ENCODE measurements at regions of chr14 and their contacts with region 1.

Region 1: GRCh38 chr14:55051426-55052268 is at the start of gene MAPK1IP1L:
- DNase-seq: peak; percentile 95

Region 2: DNA sequence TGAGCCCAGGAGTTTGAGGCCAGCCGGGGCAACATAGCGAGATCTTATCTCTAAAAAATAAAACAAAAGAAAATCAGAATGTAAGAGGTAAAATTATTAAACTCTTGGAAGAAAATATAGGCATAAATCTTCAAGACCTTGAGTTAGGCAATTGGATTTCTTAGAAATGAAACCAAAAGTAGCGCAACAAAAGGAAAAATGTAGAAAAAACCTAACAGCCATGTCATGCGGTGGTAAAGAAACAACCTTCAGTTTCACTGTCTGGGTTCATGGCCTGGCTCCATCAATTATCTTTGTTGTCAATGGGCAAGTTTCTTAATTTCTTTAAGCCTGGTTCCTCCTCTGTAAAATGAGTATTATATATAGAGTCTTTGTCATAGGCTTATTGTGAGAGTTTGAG is 143.5 kb before region 1 on chr14:
- CTCF ChIA-PET with region 1: no interaction called
- POLR2A ChIA-PET with region 1: no interaction called
- DNase-seq: no peak

Region 3: GRCh38 chr14:55026793-55027561 is 24.7 kb before region 1 on chr14 and contains the starts of genes SOCS4 and WDHD1:
- CTCF ChIA-PET with region 1: interaction called, 9 read pairs
- POLR2A ChIA-PET with region 1: interaction called, 52 read pairs
- DNase-seq: peak; percentile 95

Region 4: DNA sequence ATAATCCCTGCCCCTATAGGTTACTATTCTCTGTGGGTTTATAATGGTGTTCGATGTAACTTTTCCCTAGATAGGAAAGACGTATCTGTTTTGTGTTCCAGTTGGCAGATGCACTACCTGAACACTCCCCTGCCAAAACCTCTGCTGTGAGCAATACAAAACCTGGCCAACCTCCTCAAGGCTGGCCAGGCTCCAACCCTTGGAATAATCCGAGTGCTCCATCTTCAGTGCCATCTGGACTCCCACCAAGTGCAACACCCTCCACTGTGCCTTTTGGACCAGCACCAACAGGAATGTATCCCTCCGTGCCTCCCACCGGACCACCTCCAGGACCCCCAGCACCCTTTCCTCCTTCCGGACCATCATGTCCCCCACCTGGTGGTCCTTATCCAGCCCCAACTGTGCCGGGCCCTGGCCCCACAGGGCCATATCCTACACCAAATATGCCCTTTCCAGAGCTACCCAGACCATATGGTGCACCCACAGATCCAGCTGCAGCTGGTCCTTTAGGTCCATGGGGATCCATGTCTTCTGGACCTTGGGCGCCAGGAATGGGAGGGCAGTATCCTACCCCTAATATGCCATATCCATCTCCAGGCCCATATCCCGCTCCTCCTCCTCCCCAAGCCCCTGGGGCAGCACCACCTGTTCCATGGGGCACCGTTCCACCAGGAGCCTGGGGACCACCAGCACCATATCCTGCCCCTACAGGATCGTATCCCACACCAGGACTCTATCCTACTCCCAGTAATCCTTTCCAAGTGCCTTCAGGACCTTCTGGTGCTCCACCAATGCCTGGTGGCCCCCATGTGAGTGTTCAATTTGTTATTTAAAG is 11.1 kb after region 1 on chr14:
- CTCF ChIA-PET with region 1: interaction called, 4 read pairs
- POLR2A ChIA-PET with region 1: interaction called, 13 read pairs
- DNase-seq: no peak

Region 5: DNA sequence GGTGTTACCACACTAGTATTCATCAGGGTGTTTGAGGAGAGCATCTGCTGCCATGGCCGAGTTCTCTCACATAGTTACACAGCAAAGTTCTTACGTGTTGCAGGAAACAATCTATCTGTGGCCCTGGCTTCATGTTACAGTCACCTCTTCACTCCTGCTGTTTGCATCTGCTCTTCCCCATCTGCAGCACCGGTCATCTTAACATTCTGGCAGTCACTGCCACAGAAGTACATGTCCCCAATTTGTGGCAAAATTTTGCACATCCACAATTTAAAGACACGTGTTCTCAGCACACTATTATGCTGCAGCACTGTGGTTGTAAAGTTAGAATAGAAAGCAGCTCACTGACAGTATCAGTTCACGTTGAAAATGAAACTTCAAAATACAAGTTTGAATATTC is 23.0 kb after region 1 on chr14:
- CTCF ChIA-PET with region 1: interaction called, 4 read pairs
- POLR2A ChIA-PET with region 1: interaction called, 21 read pairs
- DNase-seq: no peak

Region 6: GRCh38 chr14:55191203-55192053 is 139.8 kb after region 1 on chr14 and contains the start of gene DLGAP5:
- CTCF ChIA-PET with region 1: no interaction called
- POLR2A ChIA-PET with region 1: interaction called, 12 read pairs
- DNase-seq: peak; percentile 93

Measured in HEK293T (cell line).